Lower leg skin (tissue), 4 donors: ENCODE measurements at regions of chr14 and their contacts with region 1.

Region 1: GRCh38 chr14:105045710-105046326 is 19.4 kb downstream of the GPR132 start:
- DNase-seq: peak; percentile 87 to 98
- H3K4me3 ChIP-seq: no peak overlapping the region
- CTCF ChIP-seq: peak in 2 of 3 donors; percentile 95 to 97
- POLR2A ChIP-seq: no peak

Region 2: DNA sequence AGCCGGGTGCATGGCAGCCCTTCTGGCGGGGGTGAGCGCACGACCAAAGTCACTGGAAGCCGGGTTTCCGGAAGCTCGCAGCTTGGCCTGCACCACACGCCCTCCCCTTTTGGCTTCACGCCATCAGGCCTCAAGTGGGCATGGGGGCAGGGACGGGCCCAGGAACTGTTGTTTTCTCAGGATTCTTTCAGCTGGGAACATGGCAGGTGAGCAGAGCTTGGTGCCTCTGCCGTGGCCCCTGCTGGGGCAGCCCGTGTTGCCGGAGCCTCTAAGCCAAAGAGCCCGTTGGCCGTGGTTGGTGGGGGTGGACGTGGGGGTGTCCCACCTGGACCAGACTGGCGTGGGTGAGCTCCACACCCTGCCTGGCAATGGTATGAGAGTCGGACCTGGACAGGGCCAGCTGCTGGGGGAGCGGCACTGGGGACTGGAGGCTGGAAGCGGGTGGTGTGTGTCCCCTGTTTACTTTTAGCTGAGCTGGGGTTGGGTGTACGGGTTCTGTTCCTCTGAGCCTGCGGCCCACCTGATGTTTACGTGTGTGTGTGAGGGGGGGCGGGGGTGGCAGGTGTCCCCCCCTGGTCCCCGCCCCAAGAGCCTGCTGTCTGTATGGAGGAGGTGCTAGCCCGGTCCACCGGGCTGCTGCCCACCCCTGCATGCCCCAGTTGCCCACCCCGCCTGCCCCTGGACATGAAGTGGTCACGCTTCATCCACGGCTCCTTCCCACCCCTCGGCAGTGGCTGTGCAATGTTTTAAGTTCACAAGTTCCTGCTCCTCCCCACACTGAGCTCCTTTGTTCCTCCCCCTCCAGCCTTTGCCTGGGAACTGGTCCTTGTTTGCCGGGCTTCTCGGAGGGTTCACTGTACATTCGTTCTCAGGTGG is 149.8 kb before region 1 on chr14:
- intact Hi-C with region 1: loop called (anchors 10 kb)
- DNase-seq: peak; percentile 13 to 86
- H3K4me3 ChIP-seq: no peak overlapping the region
- CTCF ChIP-seq: no peak
- POLR2A ChIP-seq: no peak

Region 3: DNA sequence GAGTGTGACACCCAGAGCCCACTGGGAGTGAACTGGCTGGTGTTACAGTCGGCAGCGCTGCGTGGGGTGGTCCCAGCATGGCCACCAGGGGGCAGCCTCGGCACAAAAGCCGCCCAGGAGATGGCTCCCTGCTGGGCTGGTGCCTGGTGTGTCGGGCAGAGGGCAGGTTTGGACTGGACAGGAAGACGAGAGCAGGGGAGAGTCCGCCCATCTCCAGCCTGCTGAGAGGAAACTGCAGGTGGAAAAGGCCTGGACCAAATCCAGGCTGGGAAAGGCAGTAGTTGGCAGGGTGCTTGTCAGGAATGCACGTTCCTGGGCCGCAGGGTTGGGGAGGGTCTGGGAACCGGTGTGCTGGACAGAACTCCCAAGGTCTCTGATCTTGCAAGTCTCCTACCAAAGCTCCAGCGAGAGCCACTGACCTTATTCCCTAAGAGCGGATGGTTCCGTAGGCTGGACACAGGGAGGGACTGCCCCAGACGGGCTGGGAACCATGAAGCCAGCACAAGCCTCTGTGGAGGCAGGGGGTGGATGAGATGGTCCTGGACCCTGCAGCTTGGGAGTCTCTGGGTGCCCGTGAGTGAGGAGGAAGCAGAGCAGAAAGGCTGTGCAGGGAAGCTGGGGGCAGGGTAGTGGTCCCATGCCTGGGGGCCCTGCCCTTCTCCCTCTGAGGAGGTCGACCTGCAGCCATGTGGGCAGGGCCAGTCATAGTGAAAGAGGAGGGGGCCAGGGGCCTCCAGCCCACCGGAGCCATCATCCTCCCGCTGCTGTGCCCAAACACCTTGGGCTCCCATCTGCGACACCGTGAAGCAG is 69.4 kb before region 1 on chr14:
- intact Hi-C with region 1: loop called (anchors 2 kb)
- DNase-seq: peak; percentile 82 to 97
- H3K4me3 ChIP-seq: no peak overlapping the region
- CTCF ChIP-seq: peak in 1 of 3 donors; percentile 71
- POLR2A ChIP-seq: no peak